ENCODE measurements at regions of chr4 and their contacts with region 1.

Region 1: DNA sequence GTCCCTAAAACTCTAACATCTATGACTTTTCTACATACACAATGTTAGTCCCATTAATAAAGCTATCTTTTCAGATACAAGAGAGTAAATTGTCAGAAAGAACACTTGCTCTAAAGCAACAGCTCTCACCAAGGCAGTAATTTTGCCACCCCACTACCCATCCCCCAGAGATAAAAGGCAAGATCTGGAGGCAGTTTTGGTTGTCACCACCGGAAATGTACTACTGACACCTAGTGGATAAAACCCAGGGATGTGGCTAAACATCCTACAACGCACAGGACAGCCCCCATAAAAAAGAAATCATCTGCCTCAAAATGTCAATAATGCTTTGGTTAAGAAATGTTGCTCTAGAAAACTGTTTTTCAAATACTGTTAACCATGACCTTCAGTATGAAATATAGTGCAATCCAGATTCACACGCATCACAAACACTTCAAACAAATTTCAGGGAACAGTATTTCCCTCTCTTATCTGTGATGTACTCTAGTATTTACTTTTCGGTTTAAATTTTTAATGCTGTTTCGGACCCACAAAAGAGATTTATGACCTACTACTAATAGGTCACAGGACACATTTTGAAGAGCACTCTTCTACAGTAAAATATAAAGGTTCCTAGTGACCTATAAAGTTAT is 5.1 kb downstream of the FBXL5 start:
- DNase-seq: peak in 1 of 2 donors; percentile 35
- ATAC-seq: peak; percentile 51

Region 2: DNA sequence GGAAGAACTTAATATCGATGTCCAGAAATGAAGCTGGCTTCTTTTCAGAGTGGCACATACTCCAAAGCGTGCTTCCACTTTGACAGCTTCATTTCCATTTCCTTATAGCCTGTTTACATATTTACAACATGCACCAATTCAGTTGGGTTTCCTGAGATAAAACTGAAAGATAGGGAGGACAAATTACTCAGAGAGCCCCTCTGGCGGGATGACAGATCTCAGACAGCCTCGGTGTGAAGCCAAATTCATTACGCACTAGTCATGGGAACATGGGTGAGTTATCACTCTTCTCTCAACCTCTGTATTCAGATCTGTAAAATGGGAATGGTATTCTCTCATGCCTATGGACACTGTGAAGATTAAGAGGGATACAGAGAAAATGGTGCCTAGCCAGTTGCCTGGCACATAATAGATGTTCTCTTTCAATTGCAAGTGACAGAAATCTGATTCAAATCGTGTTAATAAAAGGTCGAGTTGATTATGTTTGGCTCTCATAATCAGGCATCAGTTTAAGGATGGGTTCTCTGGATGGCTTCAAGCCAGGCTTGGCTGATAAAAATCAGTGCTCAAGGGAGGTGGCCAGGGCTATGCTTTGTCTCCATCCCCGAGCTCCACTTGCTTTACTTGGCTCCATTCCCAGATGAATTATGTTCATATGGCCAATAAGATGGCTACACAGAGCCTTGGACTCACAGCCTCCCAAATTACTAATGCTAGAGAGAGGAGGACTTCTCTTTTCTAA is 354.4 kb before region 1 on chr4:
- intact Hi-C with region 1: no loop called
- DNase-seq: no peak
- ATAC-seq: no peak

Region 3: DNA sequence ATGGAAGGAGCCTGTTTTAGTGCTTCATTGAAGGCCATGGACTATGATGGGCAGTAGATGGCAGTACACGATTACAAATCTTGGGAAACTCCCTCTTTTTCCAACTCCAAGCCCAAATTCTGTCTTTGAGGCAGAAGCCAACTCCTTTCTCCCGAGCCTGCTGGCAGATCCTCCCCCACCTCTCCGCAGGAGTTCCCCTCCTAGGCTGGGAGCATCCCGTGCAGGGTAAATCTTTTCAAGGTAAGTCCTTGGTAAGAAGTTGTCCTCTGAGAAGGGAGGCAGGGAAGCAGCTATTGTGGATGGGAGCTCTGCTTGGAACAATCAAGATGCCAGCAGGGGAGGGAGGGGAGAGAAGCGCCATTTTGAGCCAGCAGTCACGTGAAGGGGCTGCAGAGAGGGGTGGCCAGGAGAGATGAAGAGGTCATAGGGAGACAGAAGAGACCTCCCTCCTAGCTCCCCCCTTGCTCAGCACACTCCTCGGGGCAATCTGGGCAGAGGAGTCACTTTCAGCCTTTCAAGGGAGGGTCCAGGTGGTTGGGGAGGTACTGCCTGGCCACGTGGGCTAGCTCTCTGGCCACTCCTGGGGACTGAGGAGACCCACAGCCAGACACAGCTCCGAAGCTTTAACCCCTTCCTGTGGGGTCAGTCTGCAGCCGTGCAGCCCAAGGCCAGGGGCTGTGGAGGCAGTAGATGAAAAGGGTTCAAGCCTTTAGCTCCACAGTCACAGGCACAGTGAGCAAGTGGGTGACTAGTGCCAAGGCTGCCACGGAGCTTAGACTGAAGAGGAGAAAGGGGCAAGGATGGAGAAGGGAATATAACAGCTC is 170.7 kb before region 1 on chr4:
- intact Hi-C with region 1: loop called in 1 of 2 experiments (anchors 5 kb)
- DNase-seq: peak; percentile 8 to 32
- ATAC-seq: peak; percentile 70

Region 4: DNA sequence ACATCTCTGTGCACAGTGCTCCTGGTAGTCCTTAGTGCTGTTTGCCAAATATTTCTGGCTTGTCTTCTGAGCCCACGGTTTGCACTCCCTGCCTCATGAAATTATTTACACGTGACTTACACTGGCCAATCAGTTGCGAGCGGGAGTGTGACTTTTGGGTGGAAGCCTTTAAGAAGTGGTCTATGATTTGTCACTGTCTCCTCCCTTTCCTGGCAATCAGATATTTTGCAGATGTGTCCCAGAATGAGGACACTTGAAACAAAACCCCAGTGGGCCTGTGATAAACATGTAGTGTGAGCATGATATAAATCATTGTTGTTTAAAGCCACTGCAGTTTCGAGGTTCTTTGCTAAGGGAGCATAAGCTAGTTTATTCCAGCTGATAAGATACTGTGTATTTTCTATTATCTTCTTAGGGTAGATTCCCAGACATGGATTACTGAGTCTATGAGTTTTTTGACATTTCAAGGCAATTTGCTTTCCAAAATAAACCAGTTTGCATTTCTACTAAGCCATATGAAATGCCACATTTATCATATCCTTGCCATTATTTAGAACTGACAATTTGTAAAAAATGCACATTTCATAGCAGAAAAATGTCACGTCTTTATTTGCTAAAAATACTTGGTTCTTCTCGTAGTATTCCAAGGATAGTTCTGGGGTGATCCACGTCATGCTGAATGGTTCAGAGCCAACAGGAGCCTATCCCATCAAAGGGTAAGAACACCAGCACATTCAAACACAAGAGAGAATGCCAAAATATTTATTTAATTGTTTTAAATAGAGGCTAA is 64.8 kb after region 1 on chr4:
- intact Hi-C with region 1: no loop called
- DNase-seq: no peak
- ATAC-seq: no peak

Region 5: DNA sequence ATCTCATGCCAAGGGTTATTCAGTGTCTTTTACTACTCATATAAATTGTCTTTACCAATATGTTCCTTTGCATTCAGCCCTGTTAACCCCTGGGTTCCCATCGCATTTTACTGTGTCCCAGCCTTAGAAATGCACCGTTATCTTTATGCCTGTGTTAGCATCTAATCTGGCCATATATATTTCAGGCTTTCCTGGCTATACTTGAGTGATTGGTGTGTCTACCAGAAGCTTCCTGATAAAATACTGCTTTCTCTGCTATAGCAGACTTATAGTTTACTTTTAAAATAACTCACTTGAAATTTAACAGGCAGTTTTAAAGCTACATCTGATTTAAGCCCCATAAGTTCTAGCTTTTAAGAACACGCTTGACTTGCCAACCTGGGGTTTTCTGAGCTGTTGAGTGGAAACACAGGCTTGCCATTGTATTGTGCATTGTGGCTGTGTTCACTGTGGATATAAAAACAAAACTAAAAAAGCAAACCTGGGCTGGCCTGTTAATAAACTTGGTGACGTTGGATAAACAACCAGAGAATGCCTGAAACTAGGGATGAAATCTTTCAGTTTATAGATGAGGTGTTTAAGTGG is 761.6 kb after region 1 on chr4:
- intact Hi-C with region 1: no loop called
- DNase-seq: no peak
- ATAC-seq: no peak

Measured in left colon (tissue), 2 donors.